Prostate gland (tissue), 2 donors: ENCODE measurements at regions of chr19 and their contacts with region 1.

Region 1: GRCh38 chr19:2064788-2065524 is 13.9 kb upstream of the MKNK2 start:
- DNase-seq: no peak
- H3K4me3 ChIP-seq: no peak overlapping the region
- H3K27ac ChIP-seq: peak overlapping the region; percentile 76 to 86
- H3K4me1 ChIP-seq: peaks cover 18% of the 10 kb centered on the region
- H3K27me3 ChIP-seq: no peaks in the 10 kb centered on the region
- CTCF ChIP-seq: peak in 1 of 4 experiments; percentile 49
- POLR2A ChIP-seq: no peak

Region 2: GRCh38 chr19:1929021-1929742 is 135.8 kb before region 1 on chr19:
- intact Hi-C with region 1: loop called (anchors 5 kb)
- DNase-seq: peak; percentile 71
- H3K4me3 ChIP-seq: peak overlapping the region; percentile 5 to 13
- H3K27ac ChIP-seq: no peak overlapping the region
- H3K4me1 ChIP-seq: no peaks in the 10 kb centered on the region
- H3K27me3 ChIP-seq: no peaks in the 10 kb centered on the region
- CTCF ChIP-seq: peak; percentile 81 to 95 (median 90)
- POLR2A ChIP-seq: no peak

Region 3: GRCh38 chr19:2018752-2019151 is 46.2 kb before region 1 on chr19:
- intact Hi-C with region 1: loop called (anchors 2 kb)
- DNase-seq: no peak
- H3K4me3 ChIP-seq: no peak overlapping the region
- H3K27ac ChIP-seq: no peak overlapping the region
- H3K4me1 ChIP-seq: no peaks in the 10 kb centered on the region
- H3K27me3 ChIP-seq: no peaks in the 10 kb centered on the region
- CTCF ChIP-seq: no peak
- POLR2A ChIP-seq: no peak